ENCODE measurements at regions of chr9 and their contacts with region 1.

Region 1: GRCh38 chr9:27387722-27388121 is 90.8 kb upstream of the EQTN start:
- DNase-seq: no peak
- ATAC-seq: no peak
- H3K4me3 ChIP-seq: no peak overlapping the region
- H3K4me3 Mint-ChIP-seq: no peak overlapping the region
- H3K27ac ChIP-seq: no peak overlapping the region
- H3K27ac Mint-ChIP-seq: no peak overlapping the region
- H3K4me1 ChIP-seq: no peaks in the 10 kb centered on the region
- H3K4me1 Mint-ChIP-seq: no peaks in the 10 kb centered on the region
- H3K27me3 ChIP-seq: no peaks in the 10 kb centered on the region
- H3K27me3 Mint-ChIP-seq: no peaks in the 10 kb centered on the region

Region 2: GRCh38 chr9:27407986-27408385 is 20.3 kb after region 1 on chr9:
- CTCF ChIA-PET with region 1: no interaction called
- POLR2A ChIA-PET with region 1: no interaction called
- DNase-seq: no peak
- ATAC-seq: no peak
- H3K4me3 ChIP-seq: no peak overlapping the region
- H3K4me3 Mint-ChIP-seq: no peak overlapping the region
- H3K27ac ChIP-seq: no peak overlapping the region
- H3K27ac Mint-ChIP-seq: no peak overlapping the region
- H3K4me1 ChIP-seq: no peaks in the 10 kb centered on the region
- H3K4me1 Mint-ChIP-seq: no peaks in the 10 kb centered on the region
- H3K27me3 ChIP-seq: no peaks in the 10 kb centered on the region
- H3K27me3 Mint-ChIP-seq: no peaks in the 10 kb centered on the region

Region 3: DNA sequence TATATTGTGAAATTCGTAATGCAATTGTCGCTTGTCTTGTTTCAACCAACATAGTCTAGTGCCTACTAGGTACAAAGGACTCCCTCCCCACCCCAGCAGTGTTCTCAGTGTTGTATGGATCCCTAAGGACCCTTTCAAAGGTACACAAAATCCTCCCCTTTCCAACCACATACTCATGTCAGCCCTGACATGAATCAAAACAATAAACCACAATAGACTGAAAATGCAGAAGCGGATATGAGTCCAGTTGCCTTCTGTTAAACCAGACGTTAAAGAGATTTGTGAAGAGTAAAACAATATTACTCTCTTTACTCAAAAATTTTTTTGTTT is 54.0 kb after region 1 on chr9:
- CTCF ChIA-PET with region 1: interaction called in 1 of 2 experiments, 10 read pairs
- POLR2A ChIA-PET with region 1: no interaction called
- DNase-seq: no peak
- ATAC-seq: no peak
- H3K4me3 ChIP-seq: no peak overlapping the region
- H3K4me3 Mint-ChIP-seq: no peak overlapping the region
- H3K27ac ChIP-seq: no peak overlapping the region
- H3K27ac Mint-ChIP-seq: no peak overlapping the region
- H3K4me1 ChIP-seq: no peaks in the 10 kb centered on the region
- H3K4me1 Mint-ChIP-seq: no peaks in the 10 kb centered on the region
- H3K27me3 ChIP-seq: no peaks in the 10 kb centered on the region
- H3K27me3 Mint-ChIP-seq: no peaks in the 10 kb centered on the region